A549 (cell line): ENCODE measurements at regions of chr3 and their contacts with region 1.

Region 1: DNA sequence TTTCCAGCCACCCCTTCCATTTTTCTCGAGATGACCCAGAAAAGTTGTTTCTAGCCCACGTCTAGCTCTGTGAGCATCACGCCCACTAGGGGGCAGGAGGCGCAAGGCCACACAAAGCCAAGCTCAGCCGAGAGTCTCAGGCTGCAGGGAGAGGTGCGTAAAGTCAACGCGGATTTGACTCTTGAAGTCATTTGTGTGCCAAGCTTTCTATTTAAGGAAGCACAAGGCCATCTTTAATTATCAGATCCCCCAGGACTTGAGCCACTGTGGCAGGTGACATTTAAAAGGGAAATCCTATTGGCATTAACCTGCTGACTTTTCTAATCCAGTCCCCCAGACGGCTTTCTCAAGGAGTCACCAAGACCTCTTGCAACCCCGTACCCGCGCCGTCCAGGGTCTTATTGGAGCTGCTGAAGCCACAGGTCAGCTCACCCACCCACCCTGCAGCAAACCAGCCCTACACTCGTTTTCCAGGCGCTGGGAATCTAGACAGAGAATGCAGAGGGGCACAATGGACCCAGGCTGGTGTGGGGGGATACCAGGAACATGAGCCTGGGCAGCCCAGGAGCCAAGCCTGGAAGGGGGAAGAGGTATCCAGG is 62.1 kb downstream of the CAPN7 start:
- DNase-seq: peak; percentile 80 to 87
- ATAC-seq: peak; percentile 70 to 86
- H3K4me3 ChIP-seq: no peak overlapping the region
- H3K27ac ChIP-seq: peak overlapping the region in 1 of 2 experiments; percentile 85; a peak in 3 of 6 replicates
- H3K4me1 ChIP-seq: peaks cover 21% of the 10 kb centered on the region
- CTCF ChIP-seq: peak; percentile 94
- EP300 ChIP-seq: no peak
- POLR2A ChIP-seq: no peak
- RAD21 ChIP-seq: peak; percentile 96 to 98

Region 2: GRCh38 chr3:15205934-15206661 is 62.0 kb before region 1 on chr3 and contains the start of gene CAPN7:
- CTCF ChIA-PET with region 1: interaction called, 27 read pairs
- POLR2A ChIA-PET with region 1: no interaction called
- DNase-seq: peak; percentile 87 to 93
- ATAC-seq: peak; percentile 89 to 96
- H3K4me3 ChIP-seq: peak within 1 kb of the TSS; percentile 87
- H3K27ac ChIP-seq: peak within 1 kb of the TSS; percentile 92 to 94
- H3K4me1 ChIP-seq: peaks cover 19% of the 10 kb centered on the region
- CTCF ChIP-seq: peak; percentile 30; the same call in 1 of the 3 replicates
- EP300 ChIP-seq: no peak
- POLR2A ChIP-seq: peak; percentile 83
- RAD21 ChIP-seq: no peak
- polyA plus RNA-seq, gene CAPN7: 31.1 and 36.8 TPM in 2 replicates

Region 3: GRCh38 chr3:15256861-15257341 is 11.2 kb before region 1 on chr3:
- CTCF ChIA-PET with region 1: interaction called, 54 read pairs
- POLR2A ChIA-PET with region 1: no interaction called
- DNase-seq: no peak
- ATAC-seq: no peak
- H3K4me3 ChIP-seq: no peak overlapping the region
- H3K27ac ChIP-seq: no peak overlapping the region
- H3K4me1 ChIP-seq: no peaks in the 10 kb centered on the region
- CTCF ChIP-seq: no peak
- EP300 ChIP-seq: no peak
- POLR2A ChIP-seq: no peak
- RAD21 ChIP-seq: no peak

Region 4: DNA sequence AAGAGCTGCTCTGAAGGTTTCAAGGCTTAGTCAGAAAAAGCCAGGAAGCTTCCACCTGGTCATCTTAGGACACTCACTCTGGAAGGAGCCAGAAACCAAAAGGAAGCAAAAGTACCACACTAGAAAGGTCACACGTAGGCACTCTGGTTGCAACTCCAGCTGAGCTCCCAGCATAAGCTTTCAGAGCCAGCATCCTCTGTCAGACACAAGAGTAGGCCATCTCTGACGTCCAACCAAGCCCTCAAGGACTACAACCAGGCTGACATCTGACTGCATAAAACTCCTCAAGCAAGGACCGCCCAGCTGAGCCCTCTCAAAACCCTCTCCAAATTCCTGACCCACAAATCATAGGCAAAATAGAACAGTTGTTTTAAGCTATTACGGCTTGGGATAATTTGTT is 51.4 kb after region 1 on chr3:
- CTCF ChIA-PET with region 1: interaction called, 33 read pairs
- POLR2A ChIA-PET with region 1: no interaction called
- DNase-seq: no peak
- ATAC-seq: no peak; a peak in 1 of 6 replicates
- H3K4me3 ChIP-seq: no peak overlapping the region
- H3K27ac ChIP-seq: peak overlapping the region in 1 of 2 experiments; percentile 8; a peak in 1 of 6 replicates
- H3K4me1 ChIP-seq: peaks cover 22% of the 10 kb centered on the region
- CTCF ChIP-seq: no peak
- EP300 ChIP-seq: no peak
- POLR2A ChIP-seq: no peak
- RAD21 ChIP-seq: no peak

Region 5: GRCh38 chr3:15345608-15346137 is 77.5 kb after region 1 on chr3:
- CTCF ChIA-PET with region 1: interaction called, 11 read pairs
- POLR2A ChIA-PET with region 1: no interaction called
- DNase-seq: no peak
- ATAC-seq: no peak
- H3K4me3 ChIP-seq: no peak overlapping the region
- H3K27ac ChIP-seq: no peak overlapping the region
- H3K4me1 ChIP-seq: no peaks in the 10 kb centered on the region
- CTCF ChIP-seq: no peak
- EP300 ChIP-seq: no peak
- POLR2A ChIP-seq: no peak
- RAD21 ChIP-seq: no peak

Region 6: DNA sequence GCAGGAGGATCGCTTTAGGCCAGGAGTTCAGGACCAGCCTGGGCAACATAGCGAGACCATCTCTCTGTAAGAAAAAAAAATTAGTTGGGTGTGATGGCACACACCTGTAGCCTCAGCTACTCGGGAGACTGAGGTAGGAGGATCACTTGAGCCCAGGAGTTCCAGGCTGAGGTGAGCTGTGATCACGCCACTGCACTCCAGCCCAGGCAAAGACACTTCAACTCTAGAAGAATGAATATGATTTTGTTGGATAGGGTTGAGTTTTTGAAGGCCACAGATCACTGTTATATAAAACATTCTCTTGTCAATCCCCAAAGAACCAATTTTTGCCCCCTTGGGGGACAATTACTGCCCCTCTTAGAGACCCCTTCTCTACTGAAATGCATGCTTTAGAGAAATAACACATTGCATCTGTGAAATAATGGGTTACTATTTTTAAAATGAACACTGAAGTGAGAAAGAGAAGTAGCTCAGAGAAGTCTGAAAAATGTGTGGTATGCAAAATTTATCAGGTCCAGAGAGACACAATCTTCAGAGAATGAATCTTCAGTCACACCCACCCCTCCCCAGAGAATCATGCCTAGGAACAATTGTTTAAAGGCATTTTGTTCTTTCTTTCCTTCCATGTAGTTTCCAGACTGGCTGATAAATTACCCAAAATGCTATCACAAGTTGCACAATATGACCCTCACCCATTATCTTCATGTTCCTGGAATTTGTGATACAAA is 116.5 kb after region 1 on chr3:
- CTCF ChIA-PET with region 1: interaction called, 145 read pairs
- POLR2A ChIA-PET with region 1: no interaction called
- DNase-seq: no peak
- ATAC-seq: no peak
- H3K4me3 ChIP-seq: no peak overlapping the region
- H3K27ac ChIP-seq: no peak overlapping the region
- H3K4me1 ChIP-seq: no peaks in the 10 kb centered on the region
- CTCF ChIP-seq: no peak
- EP300 ChIP-seq: no peak
- POLR2A ChIP-seq: no peak
- RAD21 ChIP-seq: no peak